ENCODE measurements at regions of chr16 and their contacts with region 1.

Region 1: GRCh38 chr16:31179747-31180459 is at the start of gene FUS:
- DNase-seq: peak; percentile 94
- ATAC-seq: peak; percentile 56
- H3K4me3 Mint-ChIP-seq: peak within 1 kb of the TSS; percentile 95
- H3K27ac Mint-ChIP-seq: peak within 1 kb of the TSS; percentile 99
- H3K4me1 Mint-ChIP-seq: peaks cover 51% of the 10 kb centered on the region
- H3K27me3 Mint-ChIP-seq: no peaks in the 10 kb centered on the region
- total RNA-seq, gene FUS: 647 to 648 TPM

Region 2: DNA sequence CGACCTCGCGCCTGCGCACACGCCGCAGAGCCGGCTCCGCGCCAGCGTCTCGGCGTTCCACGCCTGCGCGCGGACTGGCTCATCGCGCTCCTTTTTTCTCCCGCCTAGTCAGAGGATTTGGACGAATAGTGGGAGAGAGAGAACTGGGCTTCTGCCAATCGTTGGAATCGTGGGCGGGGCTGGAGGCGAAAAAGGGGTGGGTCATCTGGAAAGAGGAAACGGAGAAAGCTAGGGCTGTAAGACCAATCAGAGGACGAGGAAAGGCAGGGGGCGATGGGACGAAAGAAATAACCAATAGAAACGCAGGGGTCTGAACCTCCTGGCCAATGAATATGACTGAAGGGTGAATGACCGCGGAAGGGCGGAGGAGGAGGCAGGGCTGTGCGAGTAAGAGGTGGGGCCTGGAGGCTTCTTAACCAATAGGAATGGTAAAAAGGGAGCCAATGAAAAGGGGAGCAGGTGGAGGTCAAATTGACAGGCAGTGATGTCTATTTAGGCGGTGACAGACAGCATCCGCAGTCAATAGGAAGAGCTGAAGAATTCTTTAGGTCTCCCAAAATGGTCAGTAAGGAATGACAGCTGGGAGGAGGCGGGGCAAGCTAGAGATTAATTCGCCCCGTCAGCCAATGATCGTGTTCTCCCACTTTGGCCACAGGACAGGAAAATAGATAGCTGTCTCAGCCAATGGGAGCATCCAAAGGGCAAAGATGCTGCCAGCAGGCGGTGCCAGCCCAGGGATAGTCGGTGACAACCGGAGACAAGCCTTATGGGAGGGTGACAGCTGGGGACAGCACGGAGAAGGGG is 809.3 kb before region 1 on chr16 and contains the start of gene TBC1D10B:
- CTCF ChIA-PET with region 1: no interaction called
- POLR2A ChIA-PET with region 1: no interaction called
- intact Hi-C with region 1: loop called in 1 of 2 experiments (anchors 10 kb)
- DNase-seq: peak; percentile 99
- ATAC-seq: peak; percentile 88
- H3K4me3 Mint-ChIP-seq: peak within 1 kb of the TSS; percentile 89
- H3K27ac Mint-ChIP-seq: peak within 1 kb of the TSS; percentile 97
- H3K4me1 Mint-ChIP-seq: peaks cover 40% of the 10 kb centered on the region
- H3K27me3 Mint-ChIP-seq: no peaks in the 10 kb centered on the region
- total RNA-seq, gene TBC1D10B: 38.1 to 43.4 TPM

Region 3: GRCh38 chr16:31032736-31033708 is 146.9 kb before region 1 on chr16 and contains the start of gene STX4:
- CTCF ChIA-PET with region 1: no interaction called
- POLR2A ChIA-PET with region 1: interaction called, 5 read pairs
- intact Hi-C with region 1: loop called in 1 of 2 experiments (anchors 1 kb)
- DNase-seq: peak; percentile 99
- ATAC-seq: peak; percentile 89
- H3K4me3 Mint-ChIP-seq: peak within 1 kb of the TSS; percentile 96
- H3K27ac Mint-ChIP-seq: peak within 1 kb of the TSS; percentile 93
- H3K4me1 Mint-ChIP-seq: peaks cover 15% of the 10 kb centered on the region
- H3K27me3 Mint-ChIP-seq: no peaks in the 10 kb centered on the region
- total RNA-seq, gene STX4: 29.2 to 35.9 TPM

Region 4: GRCh38 chr16:31108035-31108793 is 71.7 kb before region 1 on chr16 and contains the start of gene BCKDK:
- CTCF ChIA-PET with region 1: no interaction called
- POLR2A ChIA-PET with region 1: interaction called, 6 read pairs
- intact Hi-C with region 1: loop called (anchors 2 to 5 kb)
- DNase-seq: peak; percentile 90
- ATAC-seq: peak; percentile 79
- H3K4me3 Mint-ChIP-seq: peak within 1 kb of the TSS; percentile 86
- H3K27ac Mint-ChIP-seq: peak within 1 kb of the TSS; percentile 96
- H3K4me1 Mint-ChIP-seq: peaks cover 22% of the 10 kb centered on the region
- H3K27me3 Mint-ChIP-seq: no peaks in the 10 kb centered on the region
- total RNA-seq, gene BCKDK: 50.0 to 53.3 TPM

Region 5: DNA sequence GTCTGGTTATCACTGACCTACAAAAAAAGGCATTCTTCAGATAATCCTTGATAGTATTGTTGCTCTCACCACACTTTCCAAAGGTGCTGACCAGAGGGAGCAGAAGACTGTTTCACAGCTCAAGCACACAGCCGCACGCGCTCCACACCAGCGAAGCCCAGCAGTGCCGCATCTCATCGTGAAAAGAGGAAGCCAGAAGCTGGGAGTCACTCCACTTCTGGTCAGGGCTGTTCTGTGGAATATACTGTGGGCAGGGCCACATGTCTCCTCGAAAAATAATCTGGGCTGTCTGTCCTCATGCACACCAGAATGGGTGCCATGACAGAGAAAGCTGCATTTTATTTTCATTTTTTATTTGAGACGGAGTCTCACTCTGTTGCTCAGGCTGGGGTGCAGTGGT is 22.8 kb before region 1 on chr16:
- CTCF ChIA-PET with region 1: interaction called, 3 read pairs
- POLR2A ChIA-PET with region 1: interaction called, 7 read pairs
- intact Hi-C with region 1: loop called in 1 of 2 experiments (anchors 2 kb)
- DNase-seq: no peak
- ATAC-seq: no peak
- H3K4me3 Mint-ChIP-seq: no peak overlapping the region
- H3K27ac Mint-ChIP-seq: no peak overlapping the region
- H3K4me1 Mint-ChIP-seq: peaks cover 7% of the 10 kb centered on the region
- H3K27me3 Mint-ChIP-seq: no peaks in the 10 kb centered on the region

Region 6: GRCh38 chr16:31440516-31441184 is 260.7 kb after region 1 on chr16:
- CTCF ChIA-PET with region 1: interaction called, 3 read pairs
- POLR2A ChIA-PET with region 1: interaction called, 5 read pairs
- intact Hi-C with region 1: loop called in 1 of 2 experiments (anchors 1 kb)
- DNase-seq: no peak
- ATAC-seq: no peak
- H3K4me3 Mint-ChIP-seq: no peak overlapping the region
- H3K27ac Mint-ChIP-seq: no peak overlapping the region
- H3K4me1 Mint-ChIP-seq: peaks cover 18% of the 10 kb centered on the region
- H3K27me3 Mint-ChIP-seq: peaks cover 2% of the 10 kb centered on the region

Region 7: DNA sequence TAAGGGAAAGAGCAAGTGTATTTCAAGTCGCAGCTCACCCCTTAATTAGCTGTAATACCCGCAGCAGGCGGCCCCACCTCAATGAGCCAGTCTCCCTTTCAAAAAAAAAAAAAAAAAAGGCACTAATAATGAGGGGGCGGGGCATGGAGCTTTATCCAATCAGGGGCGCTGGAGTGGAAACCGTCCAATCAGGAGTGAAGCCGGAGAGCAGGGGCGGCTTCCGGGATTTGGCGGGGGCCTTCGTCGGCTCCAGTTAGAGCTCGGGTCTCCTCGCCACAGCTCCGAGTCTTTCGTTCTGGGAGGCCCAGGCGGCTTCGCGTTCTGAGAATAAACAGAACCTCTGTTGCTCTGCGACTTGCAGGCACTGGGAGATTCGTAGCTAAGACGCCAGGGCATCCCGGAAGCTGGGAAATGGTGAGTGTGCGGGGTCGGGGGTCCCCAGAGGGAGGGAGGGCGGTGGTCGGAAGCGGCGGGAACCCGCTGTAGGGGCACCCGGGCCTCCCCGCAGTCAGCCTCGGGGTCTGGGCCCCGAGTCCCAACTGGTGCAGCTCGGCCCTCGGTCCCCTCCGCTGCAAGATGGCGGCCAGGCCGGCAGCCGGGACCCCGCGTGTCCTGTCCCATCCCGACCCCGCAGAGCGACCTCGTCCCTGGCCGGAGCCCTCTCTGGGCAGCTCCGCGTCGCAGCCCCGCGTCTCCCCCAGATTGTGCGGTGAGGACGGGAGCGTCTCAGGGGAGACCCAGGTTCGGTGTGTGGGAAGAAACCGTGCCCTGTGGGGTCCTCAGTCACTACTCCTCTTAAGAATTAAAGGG is 693.9 kb after region 1 on chr16 and contains the start of gene ZNF267:
- CTCF ChIA-PET with region 1: no interaction called
- POLR2A ChIA-PET with region 1: interaction called, 7 read pairs
- intact Hi-C with region 1: loop called in 1 of 2 experiments (anchors 1 kb)
- DNase-seq: peak; percentile 96
- ATAC-seq: peak; percentile 60
- H3K4me3 Mint-ChIP-seq: peak within 1 kb of the TSS; percentile 94
- H3K27ac Mint-ChIP-seq: peak within 1 kb of the TSS; percentile 97
- H3K4me1 Mint-ChIP-seq: peaks cover 73% of the 10 kb centered on the region
- H3K27me3 Mint-ChIP-seq: no peaks in the 10 kb centered on the region
- total RNA-seq, gene ZNF267: 61.9 to 64.9 TPM